PC-9 (cell line): ENCODE measurements at regions of chr3 and their contacts with region 1.

Region 1: GRCh38 chr3:23805633-23806533 is at the start of gene UBE2E1:
- DNase-seq: peak in 1 of 2 experiments; percentile 54
- H3K4me3 ChIP-seq: peak within 1 kb of the TSS; percentile 97
- H3K27ac ChIP-seq: peak within 1 kb of the TSS; percentile 87
- H3K4me1 ChIP-seq: peaks cover 56% of the 10 kb centered on the region
- H3K27me3 ChIP-seq: no peaks in the 10 kb centered on the region
- CTCF ChIP-seq: no peak
- total RNA-seq, gene UBE2E1: 65.6 and 102 TPM in 2 replicates

Region 2: DNA sequence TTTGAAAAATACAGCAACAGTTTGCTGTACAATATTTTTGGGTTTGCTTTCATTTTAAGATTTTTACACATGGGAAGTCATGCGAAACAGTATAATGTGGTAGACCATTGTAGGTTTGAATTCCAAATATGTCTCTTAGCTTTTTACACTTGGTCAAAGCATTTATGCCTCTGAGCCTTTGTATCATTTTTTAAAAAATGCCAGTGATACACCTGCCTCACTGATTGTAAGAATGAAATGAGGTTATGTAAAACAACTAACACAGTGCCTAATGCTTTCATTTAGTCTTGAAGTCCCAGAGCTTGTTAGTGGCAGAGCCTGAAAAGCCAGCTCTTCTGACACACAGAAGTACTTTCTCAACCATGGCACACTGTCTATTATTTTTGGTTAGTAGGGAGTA is 400.8 kb before region 1 on chr3:
- CTCF ChIA-PET with region 1: no interaction called
- POLR2A ChIA-PET with region 1: no interaction called
- intact Hi-C with region 1: loop called (anchors 10 kb)
- DNase-seq: peak in 1 of 2 experiments; percentile 38
- H3K4me3 ChIP-seq: no peak overlapping the region
- H3K27ac ChIP-seq: no peak overlapping the region
- H3K4me1 ChIP-seq: peaks cover 32% of the 10 kb centered on the region
- H3K27me3 ChIP-seq: no peaks in the 10 kb centered on the region
- CTCF ChIP-seq: no peak

Region 3: GRCh38 chr3:23685484-23686258 is 120.2 kb before region 1 on chr3:
- CTCF ChIA-PET with region 1: no interaction called
- POLR2A ChIA-PET with region 1: no interaction called
- intact Hi-C with region 1: loop called (anchors 2 kb)
- DNase-seq: peak; percentile 91 to 96
- H3K4me3 ChIP-seq: no peak overlapping the region
- H3K27ac ChIP-seq: peak overlapping the region; percentile 82
- H3K4me1 ChIP-seq: peaks cover 26% of the 10 kb centered on the region
- H3K27me3 ChIP-seq: no peaks in the 10 kb centered on the region
- CTCF ChIP-seq: no peak

Region 4: GRCh38 chr3:23761440-23761896 is 44.4 kb before region 1 on chr3:
- CTCF ChIA-PET with region 1: no interaction called
- POLR2A ChIA-PET with region 1: no interaction called
- intact Hi-C with region 1: no loop called
- DNase-seq: peak in 1 of 2 experiments; percentile 10
- H3K4me3 ChIP-seq: no peak overlapping the region
- H3K27ac ChIP-seq: no peak overlapping the region
- H3K4me1 ChIP-seq: no peaks in the 10 kb centered on the region
- H3K27me3 ChIP-seq: no peaks in the 10 kb centered on the region
- CTCF ChIP-seq: peak; percentile 50